BJ (cell line): ENCODE measurements at regions of chr7 and their contacts with region 1.

Region 1: GRCh38 chr7:36506130-36506798 is 116.6 kb downstream of the ANLN start:
- DNase-seq: no peak
- H3K4me3 ChIP-seq: no peak overlapping the region
- H3K27me3 ChIP-seq: no peaks in the 10 kb centered on the region; the same call in 1 of the 2 replicates
- CTCF ChIP-seq: no peak

Region 2: GRCh38 chr7:36487756-36488336 is 18.4 kb before region 1 on chr7:
- CTCF ChIA-PET with region 1: interaction called, 10 read pairs
- POLR2A ChIA-PET with region 1: no interaction called
- DNase-seq: no peak
- H3K4me3 ChIP-seq: no peak overlapping the region
- H3K27me3 ChIP-seq: peaks cover 6% of the 10 kb centered on the region
- CTCF ChIP-seq: peak; percentile 71